ENCODE measurements at regions of chr9 and their contacts with region 1.

Region 1: DNA sequence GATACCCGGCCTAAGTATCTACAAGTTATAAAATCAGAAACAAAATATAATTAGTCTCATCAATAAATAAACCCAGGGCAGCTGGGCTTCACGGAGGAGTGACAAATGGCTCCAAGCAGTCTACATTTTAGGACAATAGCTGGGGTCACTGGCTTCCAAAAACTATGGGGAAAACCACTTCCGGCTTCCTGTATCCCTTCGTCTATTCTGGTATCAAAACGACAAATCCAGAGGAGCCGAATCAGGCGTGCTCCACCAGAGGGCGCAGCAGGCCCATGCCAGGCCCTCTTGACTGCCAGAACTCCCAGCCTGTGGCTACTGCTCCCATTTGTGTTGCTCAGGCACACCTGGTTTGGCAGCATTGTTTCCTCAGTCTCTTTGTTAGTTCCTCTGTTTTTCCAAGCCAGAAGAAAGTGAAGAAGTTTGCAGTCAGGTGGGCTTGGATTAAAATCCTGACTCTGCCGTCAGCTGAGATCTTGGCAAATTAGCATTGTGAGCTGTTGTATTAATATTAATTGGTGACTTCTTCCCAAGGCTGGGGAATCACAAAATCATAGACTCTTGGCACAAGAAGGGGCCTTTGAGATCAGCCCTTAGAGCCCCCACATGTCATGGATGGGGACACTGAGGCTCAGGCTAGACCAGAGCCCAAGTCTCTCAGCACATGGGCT is 11.6 kb upstream of the RAB14 start:
- DNase-seq: peak; percentile 72
- H3K4me3 Mint-ChIP-seq: no peak overlapping the region
- H3K27ac Mint-ChIP-seq: peak overlapping the region; percentile 19
- H3K4me1 Mint-ChIP-seq: peaks cover 26% of the 10 kb centered on the region
- H3K27me3 Mint-ChIP-seq: no peaks in the 10 kb centered on the region

Region 2: GRCh38 chr9:121121582-121122087 is 91.6 kb before region 1 on chr9:
- CTCF ChIA-PET with region 1: no interaction called
- POLR2A ChIA-PET with region 1: no interaction called
- DNase-seq: peak; percentile 98
- H3K4me3 Mint-ChIP-seq: peak overlapping the region; percentile 73
- H3K27ac Mint-ChIP-seq: peak overlapping the region; percentile 86
- H3K4me1 Mint-ChIP-seq: peaks cover 46% of the 10 kb centered on the region
- H3K27me3 Mint-ChIP-seq: no peaks in the 10 kb centered on the region

Region 3: GRCh38 chr9:121201738-121202533 is 11.3 kb before region 1 on chr9 and contains the start of gene RAB14:
- CTCF ChIA-PET with region 1: interaction called, 36 read pairs
- POLR2A ChIA-PET with region 1: interaction called, 6 read pairs
- DNase-seq: peak; percentile 100
- H3K4me3 Mint-ChIP-seq: peak within 1 kb of the TSS; percentile 92
- H3K27ac Mint-ChIP-seq: peak within 1 kb of the TSS; percentile 92
- H3K4me1 Mint-ChIP-seq: peaks cover 59% of the 10 kb centered on the region
- H3K27me3 Mint-ChIP-seq: no peaks in the 10 kb centered on the region
- total RNA-seq, gene RAB14: 65.8 to 68.1 TPM

Region 4: GRCh38 chr9:121233906-121234901 is 20.9 kb after region 1 on chr9:
- CTCF ChIA-PET with region 1: interaction called, 14 read pairs
- POLR2A ChIA-PET with region 1: no interaction called
- DNase-seq: no peak
- H3K4me3 Mint-ChIP-seq: no peak overlapping the region
- H3K27ac Mint-ChIP-seq: no peak overlapping the region
- H3K4me1 Mint-ChIP-seq: peaks cover 3% of the 10 kb centered on the region
- H3K27me3 Mint-ChIP-seq: no peaks in the 10 kb centered on the region

Region 5: DNA sequence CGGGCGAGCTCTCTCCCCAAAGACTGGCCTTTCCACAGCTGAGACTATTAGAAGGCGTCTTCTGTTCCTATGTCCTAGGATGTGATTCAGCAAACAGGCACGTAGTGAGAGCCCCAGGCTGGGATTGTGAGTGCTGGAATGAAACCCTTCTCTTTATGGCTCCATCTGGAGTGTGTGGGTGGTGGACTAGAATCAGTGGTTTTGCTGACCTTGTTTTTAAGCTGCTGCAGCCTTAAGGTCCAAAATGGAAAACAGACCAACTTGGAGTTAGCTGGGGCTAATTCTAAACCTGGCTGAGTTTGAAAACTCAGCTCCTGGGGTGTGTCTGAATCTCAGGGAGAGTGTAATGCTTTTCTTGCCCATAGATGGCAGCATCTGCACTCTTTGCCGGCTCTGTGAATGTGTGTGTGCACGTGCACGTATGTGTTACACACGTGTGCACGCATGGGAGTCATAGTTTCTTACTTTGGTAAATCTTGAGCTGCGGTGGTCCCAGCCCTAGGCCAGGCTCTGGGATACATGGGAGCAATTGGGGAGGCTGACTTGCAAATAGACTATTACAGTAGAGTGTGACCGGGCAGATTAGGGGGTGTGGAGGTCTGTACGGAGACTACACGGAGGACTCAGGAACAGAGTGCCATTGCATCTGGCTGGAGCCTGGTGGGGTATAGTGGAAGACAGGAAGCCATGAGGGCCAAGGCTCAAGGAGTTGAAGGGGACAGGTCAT is 65.4 kb after region 1 on chr9:
- CTCF ChIA-PET with region 1: interaction called, 22 read pairs
- POLR2A ChIA-PET with region 1: no interaction called
- DNase-seq: peak; percentile 50
- H3K4me3 Mint-ChIP-seq: no peak overlapping the region
- H3K27ac Mint-ChIP-seq: no peak overlapping the region
- H3K4me1 Mint-ChIP-seq: peaks cover 5% of the 10 kb centered on the region
- H3K27me3 Mint-ChIP-seq: no peaks in the 10 kb centered on the region

Region 6: DNA sequence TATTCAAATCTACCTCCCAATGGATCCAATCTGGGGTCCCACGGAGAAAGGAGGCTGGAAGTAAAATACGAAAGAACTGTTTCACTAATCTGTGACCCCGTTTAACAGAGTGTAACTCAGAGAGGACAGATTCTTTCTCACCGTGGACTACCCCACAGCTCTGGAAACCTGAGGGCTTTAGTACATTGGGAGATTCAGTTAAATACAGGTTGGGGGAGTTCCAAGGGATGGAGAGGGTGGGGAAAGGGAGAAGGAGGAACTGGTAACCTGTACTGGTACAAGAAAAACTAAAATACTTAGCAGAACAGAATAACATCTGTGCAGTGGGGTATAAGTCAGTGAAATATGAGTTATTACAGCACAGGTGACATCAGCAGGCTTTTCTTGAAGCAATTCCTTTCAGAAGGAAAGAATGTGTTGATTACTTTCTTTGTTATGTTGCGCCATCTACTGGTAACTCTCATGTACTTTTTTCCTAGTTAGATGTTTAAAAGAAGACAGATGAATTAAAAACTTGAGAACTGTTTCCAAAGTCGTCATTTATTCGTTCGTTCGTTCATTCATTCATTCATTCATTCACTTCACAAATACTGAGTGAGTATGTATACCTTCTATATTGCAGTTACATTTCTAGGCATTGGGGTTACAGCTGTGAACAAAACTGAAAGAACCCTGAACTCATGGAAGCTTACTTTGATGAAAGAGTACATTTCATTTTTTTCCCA is 186.8 kb after region 1 on chr9:
- CTCF ChIA-PET with region 1: interaction called, 34 read pairs
- POLR2A ChIA-PET with region 1: no interaction called
- DNase-seq: no peak
- H3K4me3 Mint-ChIP-seq: no peak overlapping the region
- H3K27ac Mint-ChIP-seq: no peak overlapping the region
- H3K4me1 Mint-ChIP-seq: peaks cover 5% of the 10 kb centered on the region
- H3K27me3 Mint-ChIP-seq: peaks cover 16% of the 10 kb centered on the region